ENCODE measurements at regions of chr9 and their contacts with region 1.

Region 1: GRCh38 chr9:120477521-120478001 is 102.4 kb downstream of the CDK5RAP2 start:
- DNase-seq: peak; percentile 50 to 66 (median 58)
- ATAC-seq: peak; percentile 97
- H3K4me3 ChIP-seq: no peak overlapping the region
- H3K27ac ChIP-seq: no peak overlapping the region
- H3K4me1 ChIP-seq: no peaks in the 10 kb centered on the region; a peak in 1 of 5 replicates
- H3K27me3 ChIP-seq: no peaks in the 10 kb centered on the region
- CTCF ChIP-seq: peak; percentile 63 to 90 (median 78)
- EP300 ChIP-seq: no peak
- POLR2A ChIP-seq: no peak
- RAD21 ChIP-seq: peak; percentile 52 to 65

Region 2: DNA sequence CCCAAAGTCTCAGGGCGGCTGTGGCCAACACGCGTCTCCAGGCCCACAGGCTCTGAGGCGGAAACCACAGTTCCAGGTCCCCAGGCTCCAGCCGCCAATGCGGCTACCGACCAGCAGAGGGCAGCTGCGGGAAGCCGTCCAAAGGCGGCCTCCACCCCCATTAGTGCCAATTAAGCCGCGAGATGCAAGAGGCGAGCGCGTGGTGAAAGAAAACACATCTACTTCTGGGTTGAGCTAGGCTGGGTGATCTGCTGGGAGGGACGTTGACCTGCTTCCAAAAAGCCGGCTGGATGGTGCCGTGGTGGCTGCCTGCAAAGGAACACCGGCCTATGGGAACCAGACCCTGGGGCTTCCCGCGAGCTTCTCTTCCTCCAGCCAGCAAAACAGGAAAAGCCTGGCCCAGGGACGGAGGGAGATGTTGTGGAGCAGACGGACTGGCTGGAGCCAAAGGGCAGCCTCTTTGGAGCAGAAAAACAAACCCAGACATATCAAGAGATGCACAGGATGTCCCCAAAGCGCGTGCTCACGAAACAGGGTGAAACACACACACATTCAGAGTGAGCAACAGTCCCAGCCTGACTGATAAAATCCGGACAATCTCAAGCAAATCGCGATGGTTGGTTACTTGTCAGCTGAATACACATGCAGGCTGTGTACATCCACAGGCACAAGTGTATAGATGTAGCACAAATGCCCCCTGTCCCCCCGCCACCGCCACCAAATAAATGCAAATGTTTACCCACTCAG is 921.3 kb before region 1 on chr9:
- CTCF ChIA-PET with region 1: no interaction called
- POLR2A ChIA-PET with region 1: no interaction called
- in situ Hi-C with region 1: loop called (anchors 25 kb)
- intact Hi-C with region 1: loop called (anchors 5 kb)
- DNase-seq: peak; percentile 46 to 53 (median 50)
- ATAC-seq: peak; percentile 84
- H3K4me3 ChIP-seq: no peak overlapping the region
- H3K27ac ChIP-seq: no peak overlapping the region
- H3K4me1 ChIP-seq: no peaks in the 10 kb centered on the region
- H3K27me3 ChIP-seq: no peaks in the 10 kb centered on the region
- CTCF ChIP-seq: peak; percentile 57 to 70 (median 58)
- EP300 ChIP-seq: no peak
- POLR2A ChIP-seq: no peak
- RAD21 ChIP-seq: peak; percentile 29 to 58; a peak in 2 of 4 replicates

Region 3: DNA sequence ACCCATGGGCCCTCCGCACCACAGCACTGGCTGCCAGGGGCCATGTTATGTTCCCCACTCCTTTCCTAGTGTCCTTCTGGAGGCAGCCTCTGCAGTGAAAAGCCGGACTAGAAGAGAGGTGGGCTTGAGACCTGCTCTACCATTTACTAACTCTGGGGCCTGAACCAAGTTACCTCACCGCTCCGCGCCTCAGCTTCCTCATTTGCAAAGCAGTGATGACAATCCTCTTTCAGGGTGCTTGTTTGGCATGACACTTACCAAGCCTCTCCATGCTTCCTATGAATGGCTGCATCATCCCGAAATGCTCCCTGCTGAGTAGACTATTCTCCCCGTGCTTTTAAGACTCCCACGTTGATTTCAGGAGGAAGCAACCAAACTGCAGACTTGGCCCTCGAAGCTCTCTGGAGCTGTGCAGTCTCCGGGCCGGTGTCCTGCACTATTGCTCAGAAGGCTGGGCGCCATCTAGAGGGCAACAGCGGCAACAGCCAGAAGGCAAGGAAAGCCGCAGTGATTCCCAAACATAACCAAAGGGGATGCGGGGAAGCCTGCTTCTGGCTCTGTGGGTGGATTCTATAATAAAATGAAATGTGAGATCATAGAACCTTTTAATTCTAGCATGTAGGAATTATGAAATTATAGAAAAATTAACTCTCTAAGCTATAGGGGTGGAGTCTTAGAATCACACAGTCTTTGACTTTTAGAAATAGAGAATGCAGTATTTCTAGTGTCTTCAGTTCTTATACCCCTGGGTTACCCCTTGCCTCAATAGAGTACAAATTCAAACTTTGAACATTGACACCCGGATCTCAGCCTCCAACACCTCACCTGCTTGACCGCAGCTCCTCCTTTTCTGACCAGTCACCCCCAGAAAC is 508.5 kb before region 1 on chr9:
- CTCF ChIA-PET with region 1: no interaction called
- POLR2A ChIA-PET with region 1: no interaction called
- in situ Hi-C with region 1: no loop called
- intact Hi-C with region 1: loop called (anchors 10 kb)
- DNase-seq: peak; percentile 66 to 73 (median 70)
- ATAC-seq: peak; percentile 99
- H3K4me3 ChIP-seq: no peak overlapping the region
- H3K27ac ChIP-seq: no peak overlapping the region
- H3K4me1 ChIP-seq: no peaks in the 10 kb centered on the region
- H3K27me3 ChIP-seq: no peaks in the 10 kb centered on the region
- CTCF ChIP-seq: peak; percentile 74 to 78 (median 75)
- EP300 ChIP-seq: no peak
- POLR2A ChIP-seq: no peak
- RAD21 ChIP-seq: peak; percentile 46 to 63

Region 4: DNA sequence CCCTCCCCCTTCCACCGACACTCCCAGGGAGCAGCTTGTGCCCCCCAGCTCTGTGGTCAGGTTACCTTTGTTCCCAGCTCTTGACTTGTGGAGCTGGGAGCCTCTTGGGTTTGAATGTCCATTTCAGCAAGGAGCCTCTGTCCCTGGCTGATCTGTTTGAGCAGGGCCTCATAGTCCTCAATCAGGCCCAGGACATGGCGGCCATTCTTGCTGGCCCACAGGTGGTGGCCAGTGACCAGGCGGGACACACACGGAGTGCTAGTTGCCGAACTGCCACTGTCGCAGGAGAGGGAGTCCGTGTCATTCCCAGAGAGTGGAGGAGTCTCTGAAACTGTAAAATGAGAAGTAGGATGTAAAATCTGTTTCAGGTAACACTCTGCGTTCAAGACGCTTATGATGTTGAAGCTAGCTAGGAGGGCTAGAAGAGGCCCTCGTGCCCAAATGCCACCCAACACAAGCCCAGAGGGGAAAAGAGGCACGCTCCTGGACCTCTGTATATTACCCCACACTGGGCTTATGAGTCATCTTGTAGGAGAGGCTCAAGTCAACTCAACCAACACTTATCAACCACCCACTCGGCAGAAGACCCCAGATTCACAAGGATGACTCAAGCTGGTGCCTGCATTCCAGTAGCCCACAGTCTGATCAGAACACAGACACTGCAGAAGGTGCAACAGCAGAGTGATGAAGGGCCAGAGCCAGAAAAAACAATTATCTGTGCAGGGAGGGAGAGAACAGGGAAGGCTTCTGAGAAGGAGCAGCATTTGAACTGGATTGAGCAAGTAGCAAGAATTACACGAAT is 74.6 kb before region 1 on chr9:
- CTCF ChIA-PET with region 1: no interaction called
- POLR2A ChIA-PET with region 1: no interaction called
- in situ Hi-C with region 1: no loop called
- intact Hi-C with region 1: loop called (anchors 10 kb)
- DNase-seq: peak; percentile 47 to 79 (median 63)
- ATAC-seq: peak; percentile 88
- H3K4me3 ChIP-seq: no peak overlapping the region
- H3K27ac ChIP-seq: peak overlapping the region; percentile 95
- H3K4me1 ChIP-seq: peaks cover 14 to 21% of the 10 kb centered on the region in 2 experiments
- H3K27me3 ChIP-seq: no peaks in the 10 kb centered on the region
- CTCF ChIP-seq: no peak
- EP300 ChIP-seq: peak; percentile 64
- POLR2A ChIP-seq: no peak
- RAD21 ChIP-seq: no peak

Region 5: GRCh38 chr9:120755827-120756434 is 278.4 kb after region 1 on chr9:
- CTCF ChIA-PET with region 1: no interaction called
- POLR2A ChIA-PET with region 1: no interaction called
- in situ Hi-C with region 1: no loop called
- intact Hi-C with region 1: no loop called
- DNase-seq: peak; percentile 75 to 84 (median 77)
- ATAC-seq: peak; percentile 92
- H3K4me3 ChIP-seq: no peak overlapping the region
- H3K27ac ChIP-seq: no peak overlapping the region
- H3K4me1 ChIP-seq: no peaks in the 10 kb centered on the region; a peak in 1 of 5 replicates
- H3K27me3 ChIP-seq: no peaks in the 10 kb centered on the region
- CTCF ChIP-seq: peak; percentile 78 to 89 (median 85)
- EP300 ChIP-seq: no peak
- POLR2A ChIP-seq: no peak
- RAD21 ChIP-seq: peak; percentile 91 to 94